CD8-positive, alpha-beta memory T cell (primary cell): ENCODE measurements at regions of chr3 and their contacts with region 1.

Region 1: DNA sequence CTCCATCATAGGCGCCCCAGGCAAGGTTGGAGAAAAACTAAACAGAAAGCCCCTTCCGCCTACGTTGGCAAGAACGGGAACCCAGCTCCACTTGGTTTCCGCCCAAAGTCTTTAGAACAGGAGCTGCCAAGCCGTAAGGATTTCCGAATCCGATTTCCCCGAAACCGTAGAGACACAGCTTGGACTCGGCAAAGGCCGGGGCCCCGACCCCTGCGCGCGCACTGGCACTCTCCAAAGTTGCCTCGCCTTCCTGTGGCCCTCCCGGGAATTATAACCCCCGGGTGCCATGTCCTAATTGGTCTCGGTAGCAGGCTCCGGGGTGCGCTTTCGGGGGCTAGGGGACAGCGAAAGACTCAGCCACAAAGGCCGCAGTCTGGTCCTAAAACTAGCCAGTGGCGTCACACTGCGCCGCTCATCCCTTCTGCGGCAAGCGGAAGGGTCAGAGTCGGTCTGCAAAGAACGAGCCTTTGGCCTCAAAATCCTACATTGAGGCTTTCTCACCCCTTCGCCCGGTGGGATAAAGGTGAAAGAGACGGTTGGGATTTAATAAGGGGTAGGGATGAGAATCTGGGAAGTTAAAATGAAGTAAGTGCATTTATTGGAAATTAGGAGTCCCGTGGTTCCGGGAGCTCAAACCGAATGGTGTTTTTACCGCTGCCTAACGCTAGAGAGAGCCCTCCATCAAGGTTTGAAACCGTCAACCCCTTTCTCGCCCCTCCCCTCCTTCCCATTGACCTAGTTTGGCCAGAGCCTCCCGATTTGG is 6.8 kb downstream of the BCL6 start:
- DNase-seq: peak; percentile 46 to 77 (median 65)
- H3K4me3 ChIP-seq: peak overlapping the region; percentile 81
- H3K4me3 Mint-ChIP-seq: peak overlapping the region; percentile 91 to 99 (median 98)
- H3K27ac ChIP-seq: peak overlapping the region; percentile 68
- H3K27ac Mint-ChIP-seq: peak overlapping the region; percentile 82 to 100 (median 99)
- H3K4me1 ChIP-seq: peaks cover 30% of the 10 kb centered on the region
- H3K4me1 Mint-ChIP-seq: peaks cover 43 to 59% (median 56%) of the 10 kb centered on the region in 3 donors
- H3K27me3 ChIP-seq: no peaks in the 10 kb centered on the region
- H3K27me3 Mint-ChIP-seq: peaks cover 0 to 9% of the 10 kb centered on the region in 2 donors

Region 2: GRCh38 chr3:186746008-186746407 is 992.5 kb before region 1 on chr3:
- CTCF ChIA-PET with region 1: no interaction called
- POLR2A ChIA-PET with region 1: no interaction called
- DNase-seq: no peak
- H3K4me3 ChIP-seq: no peak overlapping the region
- H3K4me3 Mint-ChIP-seq: no peak overlapping the region
- H3K27ac ChIP-seq: no peak overlapping the region
- H3K27ac Mint-ChIP-seq: no peak overlapping the region
- H3K4me1 ChIP-seq: no peaks in the 10 kb centered on the region
- H3K4me1 Mint-ChIP-seq: no peaks in the 10 kb centered on the region
- H3K27me3 ChIP-seq: no peaks in the 10 kb centered on the region
- H3K27me3 Mint-ChIP-seq: peaks cover 0 to 4% of the 10 kb centered on the region in 2 donors

Region 3: GRCh38 chr3:187725653-187726370 is 12.7 kb before region 1 on chr3:
- CTCF ChIA-PET with region 1: interaction called, 18 read pairs
- POLR2A ChIA-PET with region 1: no interaction called
- DNase-seq: no peak
- H3K4me3 ChIP-seq: no peak overlapping the region
- H3K4me3 Mint-ChIP-seq: no peak overlapping the region
- H3K27ac ChIP-seq: no peak overlapping the region
- H3K27ac Mint-ChIP-seq: peak overlapping the region in 1 of 8 donors; percentile 63
- H3K4me1 ChIP-seq: no peaks in the 10 kb centered on the region
- H3K4me1 Mint-ChIP-seq: no peaks in the 10 kb centered on the region
- H3K27me3 ChIP-seq: no peaks in the 10 kb centered on the region
- H3K27me3 Mint-ChIP-seq: no peaks in the 10 kb centered on the region

Region 4: GRCh38 chr3:188244395-188244861 is 505.9 kb after region 1 on chr3:
- CTCF ChIA-PET with region 1: no interaction called
- POLR2A ChIA-PET with region 1: no interaction called
- DNase-seq: no peak
- H3K4me3 ChIP-seq: no peak overlapping the region
- H3K4me3 Mint-ChIP-seq: no peak overlapping the region
- H3K27ac ChIP-seq: no peak overlapping the region
- H3K27ac Mint-ChIP-seq: peak overlapping the region in 1 of 8 donors; percentile 12
- H3K4me1 ChIP-seq: no peaks in the 10 kb centered on the region
- H3K4me1 Mint-ChIP-seq: peaks cover 13 to 18% (median 17%) of the 10 kb centered on the region in 3 donors
- H3K27me3 ChIP-seq: no peaks in the 10 kb centered on the region
- H3K27me3 Mint-ChIP-seq: peaks cover 0 to 2% of the 10 kb centered on the region in 2 donors

Region 5: DNA sequence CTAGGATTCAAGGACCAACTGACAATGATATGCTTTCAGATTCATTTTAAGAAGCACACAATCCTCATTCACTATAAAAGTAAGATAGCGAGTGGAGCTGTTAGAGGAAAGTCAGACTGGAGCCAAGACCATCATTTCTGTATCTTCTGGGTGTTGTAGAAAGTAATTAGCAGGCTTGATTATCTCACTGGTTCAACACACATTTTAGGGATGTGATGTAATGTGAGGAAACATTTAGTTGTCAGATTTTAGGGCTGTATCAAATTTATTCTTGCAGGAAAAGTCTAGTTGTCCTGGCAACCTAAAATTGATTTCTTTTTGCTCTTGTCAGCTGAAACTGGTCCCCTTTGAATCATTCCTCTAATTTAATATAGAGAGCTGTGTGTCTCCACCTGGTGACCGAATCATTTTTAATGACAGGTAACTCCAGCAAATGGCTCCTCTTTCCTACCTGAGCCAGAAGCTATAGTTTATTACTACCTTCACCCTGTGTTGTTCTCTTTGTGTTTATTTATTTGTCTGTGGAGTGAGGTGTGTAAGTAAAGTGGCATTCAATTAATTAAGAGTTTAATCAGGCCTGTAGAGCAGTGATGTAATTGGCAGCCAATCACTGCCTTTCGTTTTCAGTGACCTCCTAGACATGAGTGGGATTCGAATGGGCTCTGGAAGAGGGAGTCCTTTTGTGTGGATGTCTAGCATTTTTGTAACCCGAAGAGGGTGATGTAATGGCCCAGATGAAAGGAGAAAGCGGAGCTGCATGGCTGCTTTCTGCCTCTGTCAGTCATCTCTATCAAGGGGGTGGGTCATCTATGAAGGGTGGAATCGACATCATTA is 541.2 kb after region 1 on chr3:
- CTCF ChIA-PET with region 1: interaction called, 19 read pairs
- POLR2A ChIA-PET with region 1: no interaction called
- DNase-seq: no peak
- H3K4me3 ChIP-seq: no peak overlapping the region
- H3K4me3 Mint-ChIP-seq: no peak overlapping the region
- H3K27ac ChIP-seq: no peak overlapping the region
- H3K27ac Mint-ChIP-seq: peak overlapping the region in 1 of 8 donors; percentile 35
- H3K4me1 ChIP-seq: no peaks in the 10 kb centered on the region
- H3K4me1 Mint-ChIP-seq: peaks cover 16 to 29% (median 18%) of the 10 kb centered on the region in 3 donors
- H3K27me3 ChIP-seq: no peaks in the 10 kb centered on the region
- H3K27me3 Mint-ChIP-seq: peaks cover 0 to 2% of the 10 kb centered on the region in 2 donors

Region 6: DNA sequence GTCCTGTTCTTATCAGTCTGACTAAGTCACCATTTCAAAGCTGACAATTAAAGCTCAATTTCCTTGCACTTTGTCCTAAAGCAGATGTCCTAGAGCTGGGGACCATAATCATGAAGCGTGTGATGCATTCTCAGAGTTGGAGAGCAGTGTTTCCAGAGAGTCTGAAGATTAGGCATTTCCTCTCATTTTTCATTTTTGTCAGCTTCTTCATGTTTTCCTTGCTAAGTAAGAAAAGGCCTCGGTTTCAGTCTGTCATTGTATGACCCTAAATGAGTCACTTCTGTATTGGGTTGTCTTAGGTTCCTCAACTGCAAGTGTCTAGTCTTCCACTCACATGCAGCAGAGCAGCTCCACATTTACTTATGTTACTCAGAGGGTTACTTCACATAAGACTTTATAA is 1176.0 kb after region 1 on chr3:
- CTCF ChIA-PET with region 1: interaction called, 16 read pairs
- POLR2A ChIA-PET with region 1: no interaction called
- DNase-seq: no peak
- H3K4me3 ChIP-seq: no peak overlapping the region
- H3K4me3 Mint-ChIP-seq: no peak overlapping the region
- H3K27ac ChIP-seq: no peak overlapping the region
- H3K27ac Mint-ChIP-seq: peak overlapping the region in 3 of 8 donors; percentile 4 to 52 (median 43)
- H3K4me1 ChIP-seq: peaks cover 28% of the 10 kb centered on the region
- H3K4me1 Mint-ChIP-seq: peaks cover 38 to 43% (median 42%) of the 10 kb centered on the region in 3 donors
- H3K27me3 ChIP-seq: no peaks in the 10 kb centered on the region
- H3K27me3 Mint-ChIP-seq: no peaks in the 10 kb centered on the region

Region 7: GRCh38 chr3:189041482-189042090 is 1303.1 kb after region 1 on chr3:
- CTCF ChIA-PET with region 1: interaction called, 91 read pairs
- POLR2A ChIA-PET with region 1: interaction called, 15 read pairs
- DNase-seq: peak; percentile 33 to 80 (median 64)
- H3K4me3 ChIP-seq: no peak overlapping the region
- H3K4me3 Mint-ChIP-seq: no peak overlapping the region
- H3K27ac ChIP-seq: no peak overlapping the region
- H3K27ac Mint-ChIP-seq: peak overlapping the region; percentile 5 to 83 (median 50)
- H3K4me1 ChIP-seq: peaks cover 4% of the 10 kb centered on the region
- H3K4me1 Mint-ChIP-seq: peaks cover 8 to 12% (median 10%) of the 10 kb centered on the region in 3 donors
- H3K27me3 ChIP-seq: no peaks in the 10 kb centered on the region
- H3K27me3 Mint-ChIP-seq: no peaks in the 10 kb centered on the region

Region 8: GRCh38 chr3:189139611-189139940 is 1401.1 kb after region 1 on chr3:
- CTCF ChIA-PET with region 1: interaction called, 117 read pairs
- POLR2A ChIA-PET with region 1: interaction called, 10 read pairs
- DNase-seq: no peak
- H3K4me3 ChIP-seq: no peak overlapping the region
- H3K4me3 Mint-ChIP-seq: no peak overlapping the region
- H3K27ac ChIP-seq: no peak overlapping the region
- H3K27ac Mint-ChIP-seq: peak overlapping the region in 1 of 8 donors; percentile 6
- H3K4me1 ChIP-seq: peaks cover 27% of the 10 kb centered on the region
- H3K4me1 Mint-ChIP-seq: peaks cover 44 to 86% (median 58%) of the 10 kb centered on the region in 3 donors
- H3K27me3 ChIP-seq: no peaks in the 10 kb centered on the region
- H3K27me3 Mint-ChIP-seq: no peaks in the 10 kb centered on the region